Pancreas (tissue), 10 donors: ENCODE measurements at regions of chr9 and their contacts with region 1.

Region 1: DNA sequence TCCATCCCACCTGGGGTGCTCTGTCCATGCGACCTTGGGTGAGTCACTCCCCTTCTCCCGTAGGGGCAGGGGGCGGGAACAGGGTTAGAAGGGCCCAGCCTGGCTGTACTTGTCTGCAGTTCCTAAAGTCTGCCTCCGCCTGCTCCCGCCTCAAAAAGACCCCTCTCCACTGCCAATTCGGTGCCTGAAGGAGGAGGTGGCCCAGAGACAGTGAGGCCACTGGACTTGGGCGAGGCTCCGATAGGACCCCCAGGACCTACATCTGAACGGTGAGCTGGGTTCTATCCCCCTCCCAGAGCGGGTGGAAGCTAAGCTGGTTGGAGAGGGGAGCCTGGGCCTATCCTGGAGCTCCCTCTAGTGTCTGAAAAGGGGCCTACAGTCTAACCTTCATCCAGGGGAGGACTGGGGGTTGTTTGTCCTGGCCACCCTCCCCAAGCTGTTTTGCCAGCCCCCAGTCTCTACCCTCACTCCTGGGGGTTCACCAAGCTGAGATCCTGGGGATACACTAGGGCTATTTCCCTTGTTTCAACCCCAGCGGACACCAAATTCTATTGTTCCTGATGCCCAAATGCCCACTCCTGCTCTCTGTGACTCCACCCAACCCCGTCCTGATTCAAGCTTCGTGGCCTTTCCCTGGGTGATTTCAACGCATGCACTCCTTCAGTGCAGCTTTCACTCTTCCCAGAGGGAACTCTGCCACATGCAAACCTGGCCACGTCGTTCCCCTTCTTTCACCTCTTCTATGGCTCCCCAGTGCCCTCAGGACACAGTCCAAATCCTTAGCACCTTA is 6.1 kb upstream of the CRB2 start:
- DNase-seq: peak in 3 of 6 donors; percentile 25 to 62 (median 49)
- ATAC-seq: peak; percentile 74 to 91 (median 88)
- H3K4me3 ChIP-seq: no peak overlapping the region
- H3K27ac ChIP-seq: no peak overlapping the region
- H3K4me1 ChIP-seq: no peaks in the 10 kb centered on the region
- H3K27me3 ChIP-seq: no peaks in the 10 kb centered on the region
- CTCF ChIP-seq: peak; percentile 86 to 96 (median 91)

Region 2: GRCh38 chr9:123081824-123082223 is 268.1 kb before region 1 on chr9:
- intact Hi-C with region 1: loop called in 1 of 3 experiments (anchors 10 kb)
- DNase-seq: no peak
- ATAC-seq: peak; percentile 38 to 68 (median 59)
- H3K4me3 ChIP-seq: no peak overlapping the region
- H3K27ac ChIP-seq: no peak overlapping the region
- H3K4me1 ChIP-seq: no peaks in the 10 kb centered on the region
- H3K27me3 ChIP-seq: no peaks in the 10 kb centered on the region
- CTCF ChIP-seq: peak in 2 of 4 donors; percentile 24 to 43

Region 3: DNA sequence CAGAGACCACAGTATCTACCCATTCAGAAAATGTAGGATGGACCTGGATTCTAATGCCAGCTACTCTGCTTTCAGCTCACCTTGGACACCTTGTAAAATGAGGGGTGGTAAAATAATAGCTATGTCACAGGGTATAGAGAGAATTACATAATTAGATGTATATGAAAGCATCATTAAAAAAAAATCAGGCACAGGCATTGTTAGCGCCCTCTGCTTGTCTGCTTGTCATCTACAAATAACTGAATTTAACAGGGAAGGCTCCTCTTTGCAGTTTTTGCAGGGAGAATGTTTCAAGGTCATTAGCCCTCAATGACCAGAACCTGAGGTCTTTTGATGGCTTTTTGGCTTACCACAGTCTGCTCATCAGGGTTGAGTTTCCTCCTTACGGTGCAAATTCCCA is 258.4 kb before region 1 on chr9:
- intact Hi-C with region 1: loop called in 2 of 3 experiments (anchors 10 kb)
- DNase-seq: no peak
- ATAC-seq: no peak
- H3K4me3 ChIP-seq: no peak overlapping the region
- H3K27ac ChIP-seq: no peak overlapping the region
- H3K4me1 ChIP-seq: no peaks in the 10 kb centered on the region
- H3K27me3 ChIP-seq: no peaks in the 10 kb centered on the region
- CTCF ChIP-seq: no peak

Region 4: DNA sequence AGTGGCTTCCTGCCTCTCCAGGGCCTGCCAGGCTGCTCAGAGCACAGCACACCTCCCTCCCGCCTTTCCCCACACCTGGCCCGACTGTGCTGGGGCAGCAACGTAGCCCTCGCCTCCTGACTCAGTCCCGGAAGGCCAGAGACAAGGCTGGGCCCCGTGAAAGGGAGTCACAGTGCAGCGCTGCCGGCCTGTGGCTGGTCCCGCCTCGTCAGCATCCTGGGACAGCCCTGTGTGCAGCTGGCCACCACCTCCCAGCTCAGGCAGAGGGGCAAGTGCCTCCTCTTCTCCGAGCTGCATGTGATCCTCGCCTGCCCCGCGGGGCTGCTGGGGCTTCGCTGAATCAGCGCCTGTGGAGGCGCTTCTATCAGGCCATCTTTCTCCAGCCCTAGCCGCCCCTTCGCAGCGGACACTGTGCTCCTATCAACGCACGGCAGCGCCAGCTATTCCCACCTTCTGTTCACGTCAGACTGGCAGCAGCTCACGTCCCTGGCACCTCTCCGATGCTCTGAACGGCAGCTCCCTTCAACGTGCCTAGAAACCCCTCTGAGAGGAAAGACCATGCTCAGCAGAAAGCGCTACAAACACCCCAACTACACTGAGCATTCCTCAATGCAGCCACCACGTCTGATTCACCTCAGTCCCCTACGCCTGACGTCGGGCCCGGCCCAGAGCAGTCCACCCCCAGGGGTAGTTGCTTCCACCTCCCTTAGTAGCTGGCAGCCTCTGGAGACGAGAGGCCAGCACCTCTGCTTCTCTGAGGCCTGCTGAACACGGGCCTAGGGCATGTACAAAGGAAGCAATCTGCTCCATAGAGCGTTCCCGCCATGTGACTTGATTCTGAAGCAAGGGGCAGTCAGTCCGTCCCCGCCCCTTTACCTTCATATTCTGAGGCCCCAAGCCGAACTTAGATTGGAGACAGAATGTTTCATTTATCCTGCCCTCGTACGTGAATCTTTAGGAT is 237.6 kb before region 1 on chr9:
- intact Hi-C with region 1: loop called in 1 of 3 experiments (anchors 10 kb)
- DNase-seq: peak in 1 of 6 donors; percentile 68
- ATAC-seq: peak; percentile 34 to 57 (median 53)
- H3K4me3 ChIP-seq: no peak overlapping the region
- H3K27ac ChIP-seq: no peak overlapping the region
- H3K4me1 ChIP-seq: no peaks in the 10 kb centered on the region
- H3K27me3 ChIP-seq: no peaks in the 10 kb centered on the region
- CTCF ChIP-seq: no peak

Region 5: DNA sequence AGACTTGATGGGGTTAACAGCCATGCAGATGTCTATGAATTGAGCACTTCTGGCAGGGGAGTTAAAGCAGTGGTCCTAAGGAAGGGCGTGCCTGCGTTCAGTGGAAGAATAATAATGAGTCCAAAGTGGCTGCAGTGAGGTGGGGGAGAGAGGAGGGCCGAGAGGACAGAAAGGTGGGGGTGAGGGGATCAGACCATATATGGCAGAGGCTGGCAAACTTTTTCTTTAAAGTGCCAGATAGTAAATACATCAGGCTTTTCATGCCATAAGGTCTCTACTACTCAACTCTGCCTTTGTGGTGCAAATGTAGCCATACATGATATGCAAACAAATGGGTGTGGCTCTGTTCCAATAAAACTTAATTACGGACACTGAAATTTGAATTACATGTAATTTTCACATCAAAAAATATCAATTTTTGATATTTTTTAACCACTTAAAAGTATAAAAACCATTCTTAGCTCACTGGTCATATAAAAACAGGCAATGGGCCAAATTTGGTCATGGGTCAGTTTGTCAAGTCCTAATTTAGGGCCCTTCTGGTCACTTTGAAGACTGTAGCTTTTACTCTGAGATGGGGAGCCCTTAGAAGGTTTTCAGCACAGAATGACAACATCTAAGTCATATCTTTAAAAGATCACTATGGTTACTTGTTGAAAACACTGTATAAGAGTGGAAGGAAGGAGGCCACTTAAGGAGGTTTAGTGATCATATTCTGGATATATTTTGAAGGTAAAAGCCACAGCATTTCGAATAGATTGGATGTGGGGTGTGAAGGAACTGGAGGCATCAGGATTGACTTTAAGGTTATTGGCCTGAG is 158.4 kb before region 1 on chr9:
- intact Hi-C with region 1: no loop called
- DNase-seq: no peak
- ATAC-seq: no peak
- H3K4me3 ChIP-seq: no peak overlapping the region
- H3K27ac ChIP-seq: no peak overlapping the region
- H3K4me1 ChIP-seq: no peaks in the 10 kb centered on the region
- H3K27me3 ChIP-seq: no peaks in the 10 kb centered on the region
- CTCF ChIP-seq: no peak

Region 6: DNA sequence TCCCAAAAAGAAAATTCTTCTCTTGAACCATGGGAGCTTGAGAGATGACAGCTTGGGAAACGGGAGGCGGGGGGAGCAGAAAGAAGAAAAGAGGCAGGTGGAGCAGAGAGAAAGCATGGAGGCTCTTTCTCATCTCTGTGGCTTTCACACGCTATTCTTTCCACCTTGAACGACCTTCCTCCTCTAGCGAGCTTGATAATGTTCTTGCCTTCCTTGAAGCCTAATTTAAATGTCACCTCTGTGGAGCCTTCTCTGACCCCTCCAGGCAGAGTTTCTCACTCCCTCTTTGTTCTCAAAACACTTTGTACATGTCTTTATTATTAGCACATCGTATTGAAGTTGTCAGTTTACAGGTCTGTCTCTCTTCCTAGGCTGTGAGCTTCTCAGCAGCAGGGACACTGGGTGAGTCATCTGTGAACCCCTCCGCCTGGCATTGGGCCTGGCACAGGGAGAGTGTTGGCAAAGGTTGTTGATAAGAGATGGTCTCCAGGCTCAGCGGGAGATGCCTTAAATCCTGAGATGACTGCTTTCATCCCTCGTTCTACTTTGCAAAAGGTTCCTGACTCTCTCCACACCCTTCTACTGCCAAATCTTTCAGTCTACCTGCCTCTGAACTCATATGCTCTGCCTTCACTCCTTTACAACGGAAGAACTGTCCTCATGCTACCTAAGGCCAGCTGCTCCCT is 67.4 kb before region 1 on chr9:
- intact Hi-C with region 1: no loop called
- DNase-seq: peak in 3 of 6 donors; percentile 57 to 71 (median 65)
- ATAC-seq: peak; percentile 70 to 86 (median 80)
- H3K4me3 ChIP-seq: no peak overlapping the region
- H3K27ac ChIP-seq: no peak overlapping the region
- H3K4me1 ChIP-seq: no peaks in the 10 kb centered on the region
- H3K27me3 ChIP-seq: no peaks in the 10 kb centered on the region
- CTCF ChIP-seq: no peak

Region 7: DNA sequence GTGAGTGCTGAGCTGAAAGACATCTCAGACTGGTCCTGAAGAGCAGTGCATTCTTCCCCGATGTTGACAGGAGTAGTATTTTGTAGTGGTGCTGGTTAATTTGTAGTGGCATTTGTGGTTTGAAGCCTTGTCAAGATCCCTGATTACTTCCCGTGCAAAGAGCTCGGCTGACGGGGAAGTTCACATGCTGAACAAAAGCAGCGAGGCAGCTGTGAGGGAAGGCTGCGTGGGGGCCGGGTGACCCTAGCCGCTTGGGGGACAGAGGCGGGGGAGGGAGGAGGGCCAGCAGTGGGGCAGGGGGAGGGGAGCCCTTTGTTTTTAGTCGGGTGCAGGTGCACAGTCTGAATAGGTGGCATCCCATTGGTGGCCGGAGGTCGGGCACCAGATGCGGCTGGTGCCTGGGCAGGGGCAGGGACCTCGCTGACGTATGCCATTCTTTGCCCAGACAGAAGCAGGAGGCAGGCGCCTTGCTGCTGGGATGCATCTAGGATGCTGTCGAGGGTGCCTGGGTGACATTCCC is 70.8 kb after region 1 on chr9:
- intact Hi-C with region 1: no loop called
- DNase-seq: peak in 1 of 6 donors; percentile 44
- ATAC-seq: no peak
- H3K4me3 ChIP-seq: no peak overlapping the region
- H3K27ac ChIP-seq: no peak overlapping the region
- H3K4me1 ChIP-seq: no peaks in the 10 kb centered on the region
- H3K27me3 ChIP-seq: no peaks in the 10 kb centered on the region
- CTCF ChIP-seq: no peak